AG04449 (cell line): ENCODE measurements at regions of chr14 and their contacts with region 1.

Region 1: GRCh38 chr14:61925043-61925442 is 162.8 kb downstream of the SNAPC1 start:
- DNase-seq: no peak
- H3K4me3 ChIP-seq: no peak overlapping the region
- CTCF ChIP-seq: peak; percentile 28

Region 2: DNA sequence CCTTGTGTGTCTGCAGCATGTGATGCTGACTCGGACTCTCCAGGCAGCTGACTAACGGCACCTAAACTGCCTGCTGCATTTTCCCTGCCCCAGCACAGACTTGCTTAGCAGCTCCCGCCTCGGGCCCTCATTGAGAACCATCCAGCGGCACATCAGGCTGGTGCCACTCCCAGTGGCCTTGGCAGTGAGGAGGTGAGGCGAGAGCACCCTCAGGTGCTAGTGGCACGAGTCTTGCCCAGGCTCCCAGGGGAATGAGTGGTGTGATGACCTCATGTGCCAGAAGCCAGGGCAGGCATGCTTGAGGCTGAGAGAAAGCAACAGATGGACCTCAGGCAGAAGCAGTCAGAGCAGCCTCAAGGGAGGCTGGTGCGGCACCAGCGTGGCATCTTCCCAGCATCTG is 543.5 kb before region 1 on chr14:
- CTCF ChIA-PET with region 1: no interaction called
- POLR2A ChIA-PET with region 1: no interaction called
- DNase-seq: no peak
- H3K4me3 ChIP-seq: no peak overlapping the region
- CTCF ChIP-seq: no peak

Region 3: GRCh38 chr14:61644834-61645233 is 280.2 kb before region 1 on chr14:
- CTCF ChIA-PET with region 1: no interaction called
- POLR2A ChIA-PET with region 1: no interaction called
- DNase-seq: no peak
- H3K4me3 ChIP-seq: no peak overlapping the region
- CTCF ChIP-seq: no peak

Region 4: DNA sequence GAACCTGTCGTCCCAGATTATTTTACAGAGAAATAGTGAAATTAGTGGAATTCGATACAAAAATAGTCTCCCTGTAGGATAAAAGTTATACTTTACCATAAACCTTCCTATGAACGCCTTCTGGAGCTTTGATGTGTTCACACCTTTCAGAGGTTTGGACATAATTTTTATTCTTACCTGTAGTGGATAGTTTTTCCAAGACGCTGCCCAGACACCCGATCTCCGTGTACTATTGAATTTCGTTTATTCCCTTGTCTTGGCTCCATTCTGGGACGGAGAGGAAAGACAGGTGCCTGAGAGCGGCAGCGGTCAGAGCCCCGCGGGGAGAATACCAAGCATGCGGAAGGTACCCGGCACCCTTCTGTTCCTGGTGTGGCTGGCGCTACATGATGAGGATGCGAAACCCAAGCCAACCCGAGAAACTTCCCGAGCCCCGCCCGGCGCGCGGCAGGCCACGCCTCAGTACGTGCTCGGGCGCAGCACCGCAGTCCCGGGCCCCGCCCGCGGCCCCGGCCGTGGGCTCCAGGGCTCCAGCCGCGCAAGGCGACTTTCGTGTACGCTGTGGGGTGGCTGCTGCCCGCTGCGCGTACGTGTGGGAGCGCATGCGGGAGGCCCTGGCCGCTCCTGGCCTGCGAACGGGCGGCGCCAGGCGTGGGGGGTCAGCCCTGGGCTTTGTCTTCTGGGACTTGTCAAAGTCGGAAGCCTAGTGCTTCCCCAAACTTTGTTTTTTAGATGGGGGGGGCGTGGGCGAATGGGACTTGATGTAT is 174.2 kb before region 1 on chr14:
- CTCF ChIA-PET with region 1: no interaction called
- POLR2A ChIA-PET with region 1: no interaction called
- DNase-seq: no peak
- H3K4me3 ChIP-seq: peak overlapping the region; percentile 44
- CTCF ChIP-seq: no peak

Region 5: DNA sequence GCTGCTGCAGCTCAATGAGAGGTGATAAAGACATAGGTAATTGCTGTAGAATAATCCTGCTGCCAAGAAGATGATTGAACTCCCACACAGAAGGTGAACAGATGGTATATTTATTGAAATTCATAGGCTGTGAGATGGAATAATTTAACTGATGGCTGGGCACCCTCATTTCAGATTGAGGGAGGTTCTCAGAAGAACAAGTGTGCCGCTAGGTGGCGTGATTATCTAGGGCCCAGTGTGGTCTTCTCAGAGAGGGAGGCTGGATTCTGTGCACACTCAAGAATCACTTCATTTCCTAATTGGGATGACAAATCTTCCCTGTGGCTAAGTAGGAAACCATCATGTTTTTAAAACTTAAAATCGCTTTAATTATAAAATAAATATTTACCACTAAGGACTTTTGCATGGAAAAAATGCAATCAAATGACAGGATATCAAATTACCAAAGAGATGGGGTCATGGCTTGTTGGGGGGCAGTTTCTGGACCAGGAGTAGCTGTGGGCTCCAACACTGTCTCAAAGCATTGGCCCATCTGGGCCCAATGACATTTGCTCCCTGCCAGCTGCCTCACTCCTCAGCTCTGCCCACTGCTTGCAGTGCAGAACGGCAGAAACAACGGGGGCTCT is 30.5 kb before region 1 on chr14:
- CTCF ChIA-PET with region 1: interaction called, 10 read pairs
- POLR2A ChIA-PET with region 1: no interaction called
- DNase-seq: peak; percentile 34
- H3K4me3 ChIP-seq: no peak overlapping the region
- CTCF ChIP-seq: peak; percentile 81

Region 6: GRCh38 chr14:62117010-62117750 is 192.1 kb after region 1 on chr14:
- CTCF ChIA-PET with region 1: interaction called, 12 read pairs
- POLR2A ChIA-PET with region 1: no interaction called
- DNase-seq: no peak
- H3K4me3 ChIP-seq: peak overlapping the region; percentile 52
- CTCF ChIP-seq: peak; percentile 48

Region 7: DNA sequence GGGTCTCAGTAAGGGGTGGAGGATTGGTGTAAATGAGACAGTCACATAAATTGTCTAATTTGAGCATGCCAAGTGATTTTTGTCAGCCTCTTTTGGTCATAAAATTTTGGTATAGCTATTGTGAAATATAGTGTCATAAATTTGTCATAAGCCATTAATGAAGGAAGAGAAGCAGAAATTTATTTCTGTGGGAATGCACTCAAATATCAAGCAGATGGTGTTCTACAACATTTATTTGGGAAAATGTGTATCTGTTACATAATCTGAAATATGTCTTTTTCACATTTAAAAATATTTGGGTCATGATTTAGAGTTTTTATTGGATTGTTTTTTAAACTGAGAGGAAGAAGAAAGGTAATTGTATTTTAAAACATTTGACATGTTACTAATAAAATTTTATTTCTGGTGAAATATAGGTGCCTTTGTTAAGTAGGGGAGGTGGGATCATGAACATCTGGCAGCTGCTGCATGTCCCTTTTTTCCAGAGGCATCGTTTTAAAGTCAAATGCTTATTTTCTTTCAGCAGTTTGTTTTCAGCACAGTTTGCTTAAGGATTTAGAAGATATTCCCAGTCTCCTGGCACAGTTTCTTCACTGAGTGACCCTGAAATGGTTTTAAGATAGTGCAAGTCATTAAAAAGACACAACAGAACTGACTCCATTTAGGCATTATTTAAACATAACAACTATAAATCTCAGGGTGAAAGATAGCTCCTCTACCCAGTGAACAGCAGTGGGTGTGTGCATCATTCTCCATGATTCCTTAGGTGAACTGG is 208.9 kb after region 1 on chr14:
- CTCF ChIA-PET with region 1: interaction called, 131 read pairs
- POLR2A ChIA-PET with region 1: no interaction called
- DNase-seq: no peak
- H3K4me3 ChIP-seq: no peak overlapping the region
- CTCF ChIP-seq: no peak